GM23248 (cell line): ENCODE measurements at regions of chr3 and their contacts with region 1.

Region 1: GRCh38 chr3:157201648-157202278 is 41.8 kb upstream of the CCNL1 start:
- DNase-seq: peak; percentile 71
- H3K4me3 ChIP-seq: peak overlapping the region; percentile 26; the same call in 1 of the 2 replicates
- H3K27ac ChIP-seq: no peak overlapping the region
- H3K4me1 ChIP-seq: peaks cover 13% of the 10 kb centered on the region
- H3K27me3 ChIP-seq: no peaks in the 10 kb centered on the region

Region 2: DNA sequence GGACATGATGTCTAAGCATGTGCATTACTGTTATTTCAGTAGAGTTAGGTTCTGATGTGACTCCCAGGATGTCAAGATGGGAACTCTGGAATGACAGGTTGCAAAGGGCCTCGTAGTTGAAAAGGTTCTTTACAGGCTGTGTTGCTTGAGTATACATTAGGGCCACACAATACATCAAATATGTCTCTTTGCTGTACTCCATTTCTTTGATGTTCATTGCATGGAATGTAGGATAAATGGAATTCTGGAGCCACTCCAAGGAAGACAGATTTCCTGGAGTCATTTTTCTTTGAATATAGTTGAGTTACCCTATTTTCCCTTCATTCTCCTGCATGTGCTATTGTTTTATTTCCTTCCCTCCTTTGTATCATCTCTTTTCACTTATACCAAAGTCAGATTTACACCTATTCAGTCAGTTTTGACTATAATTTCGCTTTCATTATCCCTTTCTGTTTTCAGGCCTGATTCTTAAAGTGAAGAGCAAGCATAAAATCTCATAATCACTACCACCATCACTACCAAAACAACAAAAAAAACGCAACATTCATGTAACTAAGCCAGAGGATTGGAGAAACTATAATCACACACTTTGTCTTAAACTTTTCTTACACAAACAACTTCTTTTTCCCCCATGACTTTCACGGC is 173.7 kb after region 1 on chr3:
- in situ Hi-C with region 1: no loop called
- DNase-seq: no peak
- H3K4me3 ChIP-seq: no peak overlapping the region
- H3K27ac ChIP-seq: no peak overlapping the region
- H3K4me1 ChIP-seq: peaks cover 30% of the 10 kb centered on the region
- H3K27me3 ChIP-seq: no peaks in the 10 kb centered on the region

Region 3: GRCh38 chr3:157493627-157494550 is 292.1 kb after region 1 on chr3:
- in situ Hi-C with region 1: loop called (anchors 10 kb)
- DNase-seq: peak; percentile 78
- H3K4me3 ChIP-seq: no peak overlapping the region
- H3K27ac ChIP-seq: no peak overlapping the region
- H3K4me1 ChIP-seq: peaks cover 25% of the 10 kb centered on the region
- H3K27me3 ChIP-seq: no peaks in the 10 kb centered on the region